ENCODE measurements at regions of chr3 and their contacts with region 1.

Region 1: DNA sequence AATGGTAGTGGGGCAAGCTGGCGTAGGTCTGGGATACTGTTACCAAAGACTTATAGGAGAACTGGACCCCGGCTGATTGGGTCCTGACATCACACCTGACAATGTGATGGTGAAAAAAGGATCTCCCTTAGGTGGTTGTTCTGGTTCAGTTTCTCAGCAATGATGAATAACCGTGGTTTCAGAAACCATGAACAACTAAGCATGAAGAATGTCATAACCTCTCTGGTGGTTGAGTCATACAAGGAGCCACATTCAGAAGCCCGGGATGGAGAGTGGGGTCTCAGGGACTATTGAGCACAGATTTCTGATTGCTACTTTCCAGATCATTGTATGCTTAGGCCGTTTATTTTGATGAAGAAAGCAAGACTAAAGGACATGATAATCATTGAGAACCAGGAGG is 17.4 kb downstream of the GPR160 start:
- DNase-seq: peak; percentile 50
- H3K4me3 Mint-ChIP-seq: no peak overlapping the region
- H3K27ac Mint-ChIP-seq: no peak overlapping the region
- H3K4me1 Mint-ChIP-seq: peaks cover 41% of the 10 kb centered on the region
- H3K27me3 Mint-ChIP-seq: no peaks in the 10 kb centered on the region

Region 2: DNA sequence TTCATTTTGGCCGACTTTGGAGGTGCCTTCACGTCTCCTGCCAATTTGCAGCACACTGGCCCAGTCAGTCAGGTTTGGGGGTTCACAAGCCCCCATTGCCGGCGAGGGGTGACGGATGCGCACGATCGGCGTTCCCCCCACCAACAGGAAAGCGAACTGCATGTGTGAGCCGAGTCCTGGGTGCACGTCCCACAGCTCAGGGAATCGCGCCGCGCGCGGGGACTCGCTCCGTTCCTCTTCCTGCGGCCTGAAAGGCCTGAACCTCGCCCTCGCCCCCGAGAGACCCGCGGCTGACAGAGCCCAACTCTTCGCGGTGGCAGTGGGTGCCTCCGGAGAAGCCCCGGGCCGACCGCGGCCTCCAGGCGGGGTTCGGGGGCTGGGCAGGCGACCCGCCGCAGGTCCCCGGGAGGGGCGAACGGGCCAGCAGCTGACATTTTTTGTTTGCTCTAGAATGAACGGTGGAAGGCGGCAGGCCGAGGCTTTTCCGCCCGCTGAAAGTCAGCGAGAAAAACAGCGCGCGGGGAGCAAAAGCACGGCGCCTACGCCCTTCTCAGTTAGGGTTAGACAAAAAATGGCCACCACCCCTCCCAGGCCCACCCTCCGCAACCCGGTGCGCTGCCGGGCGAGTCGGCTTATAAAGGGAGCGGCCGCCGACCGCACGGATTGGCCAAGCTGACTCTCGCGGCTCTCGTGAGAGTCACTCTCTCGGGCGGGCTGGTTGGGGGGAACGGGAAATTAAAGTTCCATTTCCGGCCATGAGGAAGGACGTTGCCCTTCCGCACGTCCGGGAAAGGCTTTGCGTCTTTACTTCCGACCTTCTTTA is 290.5 kb before region 1 on chr3 and contains the start of gene TERC:
- CTCF ChIA-PET with region 1: no interaction called
- POLR2A ChIA-PET with region 1: no interaction called
- intact Hi-C with region 1: loop called (anchors 1 kb)
- DNase-seq: peak; percentile 95
- H3K4me3 Mint-ChIP-seq: peak within 1 kb of the TSS; percentile 96
- H3K27ac Mint-ChIP-seq: peak within 1 kb of the TSS; percentile 99
- H3K4me1 Mint-ChIP-seq: peaks cover 22% of the 10 kb centered on the region
- H3K27me3 Mint-ChIP-seq: no peaks in the 10 kb centered on the region
- total RNA-seq, gene TERC: 11.5 to 19.2 TPM

Region 3: GRCh38 chr3:169863458-169863899 is 191.7 kb before region 1 on chr3:
- CTCF ChIA-PET with region 1: interaction called, 11 read pairs
- POLR2A ChIA-PET with region 1: no interaction called
- intact Hi-C with region 1: loop called (anchors 1 kb)
- DNase-seq: peak; percentile 79
- H3K4me3 Mint-ChIP-seq: no peak overlapping the region
- H3K27ac Mint-ChIP-seq: no peak overlapping the region
- H3K4me1 Mint-ChIP-seq: peaks cover 8% of the 10 kb centered on the region
- H3K27me3 Mint-ChIP-seq: peaks cover 10% of the 10 kb centered on the region

Region 4: DNA sequence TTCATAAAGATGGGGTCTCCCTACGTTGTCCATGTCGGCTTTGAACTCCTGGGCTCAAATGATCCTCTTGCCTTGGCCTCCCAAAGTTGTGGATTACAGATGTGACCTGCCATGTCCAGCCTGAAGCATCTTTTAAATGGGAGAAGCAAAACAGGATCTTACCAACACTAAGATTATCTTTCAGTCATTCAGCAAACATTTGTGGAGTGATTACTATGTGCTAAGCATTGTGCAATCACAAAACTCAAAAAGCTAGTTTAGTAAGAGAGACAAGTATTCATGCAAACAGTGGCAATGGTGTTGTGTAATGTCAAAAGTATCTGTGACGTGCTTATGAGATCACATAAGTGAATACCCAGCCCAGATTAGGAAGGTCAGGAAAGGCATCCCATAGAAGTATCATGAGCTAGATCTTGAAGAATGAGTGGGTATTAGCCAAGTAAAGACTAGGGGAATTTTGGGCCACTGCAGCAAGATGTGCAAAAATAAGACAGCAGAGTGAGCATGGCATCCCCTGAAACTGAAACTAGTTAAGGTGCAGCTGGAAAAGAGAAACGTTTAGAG is 56.6 kb before region 1 on chr3:
- CTCF ChIA-PET with region 1: no interaction called
- POLR2A ChIA-PET with region 1: no interaction called
- intact Hi-C with region 1: loop called (anchors 1 kb)
- DNase-seq: peak; percentile 14
- H3K4me3 Mint-ChIP-seq: no peak overlapping the region
- H3K27ac Mint-ChIP-seq: peak overlapping the region; percentile 83
- H3K4me1 Mint-ChIP-seq: peaks cover 36% of the 10 kb centered on the region
- H3K27me3 Mint-ChIP-seq: no peaks in the 10 kb centered on the region

Region 5: GRCh38 chr3:170089862-170090600 is 34.8 kb after region 1 on chr3:
- CTCF ChIA-PET with region 1: no interaction called
- POLR2A ChIA-PET with region 1: no interaction called
- intact Hi-C with region 1: loop called (anchors 2 kb)
- DNase-seq: no peak
- H3K4me3 Mint-ChIP-seq: no peak overlapping the region
- H3K27ac Mint-ChIP-seq: peak overlapping the region; percentile 28
- H3K4me1 Mint-ChIP-seq: peaks cover 19% of the 10 kb centered on the region
- H3K27me3 Mint-ChIP-seq: no peaks in the 10 kb centered on the region

Region 6: GRCh38 chr3:170257145-170257544 is 201.9 kb after region 1 on chr3:
- CTCF ChIA-PET with region 1: no interaction called
- POLR2A ChIA-PET with region 1: interaction called, 4 read pairs
- intact Hi-C with region 1: loop called (anchors 5 kb)
- DNase-seq: peak; percentile 64
- H3K4me3 Mint-ChIP-seq: no peak overlapping the region
- H3K27ac Mint-ChIP-seq: peak overlapping the region; percentile 26
- H3K4me1 Mint-ChIP-seq: peaks cover 40% of the 10 kb centered on the region
- H3K27me3 Mint-ChIP-seq: no peaks in the 10 kb centered on the region

Measured in activated CD4-positive, alpha-beta memory T cell treated with anti-CD3 and anti-CD28 coated beads for 36 hours (primary cell).